ENCODE measurements at regions of chr1 and their contacts with region 1.

Region 1: GRCh38 chr1:205523891-205524793 is 19.7 kb downstream of the CDK18 start:
- DNase-seq: peak; percentile 79
- ATAC-seq: no peak
- H3K4me3 Mint-ChIP-seq: no peak overlapping the region
- H3K27ac Mint-ChIP-seq: no peak overlapping the region
- H3K4me1 Mint-ChIP-seq: no peaks in the 10 kb centered on the region
- H3K27me3 Mint-ChIP-seq: no peaks in the 10 kb centered on the region

Region 2: DNA sequence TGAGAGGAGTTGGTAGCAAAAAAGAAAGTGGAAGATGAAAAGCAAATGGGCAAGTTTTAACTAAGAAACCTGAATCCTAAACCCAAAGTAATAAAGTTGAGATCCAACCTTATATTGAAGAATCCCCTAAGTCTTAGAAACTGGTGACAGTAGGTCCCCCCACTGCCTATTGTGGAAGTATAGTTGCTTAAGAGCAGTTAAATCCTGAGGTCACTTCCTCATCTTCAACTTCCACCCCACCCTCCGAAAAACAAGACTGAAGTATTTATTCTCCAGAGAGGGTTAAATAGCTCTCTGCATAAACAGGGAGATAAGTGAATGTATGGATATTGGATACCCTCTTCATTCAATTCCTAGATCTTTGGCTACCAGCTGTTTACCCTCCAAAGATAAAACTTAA is 309.4 kb before region 1 on chr1:
- CTCF ChIA-PET with region 1: no interaction called
- POLR2A ChIA-PET with region 1: no interaction called
- DNase-seq: no peak
- ATAC-seq: no peak
- H3K4me3 Mint-ChIP-seq: peak overlapping the region; percentile 9
- H3K27ac Mint-ChIP-seq: peak overlapping the region; percentile 60
- H3K4me1 Mint-ChIP-seq: peaks cover 37% of the 10 kb centered on the region
- H3K27me3 Mint-ChIP-seq: peaks cover 4% of the 10 kb centered on the region

Region 3: DNA sequence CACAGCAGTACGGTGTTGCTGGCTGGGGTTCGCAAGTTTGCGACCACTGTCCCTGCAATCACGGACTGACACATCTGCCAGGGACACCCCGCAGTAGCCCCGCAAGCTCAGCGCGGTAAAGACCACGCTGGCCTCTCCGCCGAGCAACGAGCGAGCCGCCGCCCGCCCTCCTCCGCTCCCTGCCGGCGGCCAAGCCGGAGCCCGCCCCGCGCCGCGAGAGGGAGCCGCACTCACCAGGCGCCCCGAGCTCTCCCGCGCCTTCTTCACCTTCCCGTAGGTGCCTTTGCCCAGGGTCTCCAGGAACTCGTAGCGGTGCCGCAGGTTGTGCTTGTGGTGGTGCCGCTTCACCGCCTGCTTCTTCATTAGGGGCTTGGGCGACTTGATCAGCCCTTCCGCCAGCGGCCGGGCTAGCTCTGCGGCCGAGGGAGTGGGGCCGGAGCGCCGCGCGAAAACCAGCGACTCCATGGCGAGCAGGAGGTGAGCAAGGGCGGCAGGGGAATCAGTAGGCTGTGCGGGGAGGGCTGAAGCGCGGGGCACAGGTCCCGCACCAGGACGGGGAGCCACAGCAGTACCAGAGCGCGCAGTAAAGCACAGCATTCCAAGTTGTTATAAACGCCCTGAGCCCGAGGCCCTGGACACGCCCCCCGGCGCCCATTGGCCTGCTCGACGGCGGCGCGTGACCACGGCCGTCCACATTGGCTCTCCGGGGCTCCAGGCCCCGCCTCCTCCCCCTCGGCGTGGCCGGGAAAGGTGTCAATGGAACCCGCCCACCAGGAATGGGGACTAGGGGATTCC is 202.8 kb before region 1 on chr1 and contains the start of gene NUAK2:
- CTCF ChIA-PET with region 1: interaction called, 15 read pairs
- POLR2A ChIA-PET with region 1: no interaction called
- DNase-seq: peak; percentile 69
- ATAC-seq: peak; percentile 79
- H3K4me3 Mint-ChIP-seq: peak within 1 kb of the TSS; percentile 87
- H3K27ac Mint-ChIP-seq: peak within 1 kb of the TSS; percentile 56
- H3K4me1 Mint-ChIP-seq: peaks cover 52% of the 10 kb centered on the region
- H3K27me3 Mint-ChIP-seq: peaks cover 36% of the 10 kb centered on the region
- total RNA-seq, gene NUAK2: 1.6 TPM

Region 4: DNA sequence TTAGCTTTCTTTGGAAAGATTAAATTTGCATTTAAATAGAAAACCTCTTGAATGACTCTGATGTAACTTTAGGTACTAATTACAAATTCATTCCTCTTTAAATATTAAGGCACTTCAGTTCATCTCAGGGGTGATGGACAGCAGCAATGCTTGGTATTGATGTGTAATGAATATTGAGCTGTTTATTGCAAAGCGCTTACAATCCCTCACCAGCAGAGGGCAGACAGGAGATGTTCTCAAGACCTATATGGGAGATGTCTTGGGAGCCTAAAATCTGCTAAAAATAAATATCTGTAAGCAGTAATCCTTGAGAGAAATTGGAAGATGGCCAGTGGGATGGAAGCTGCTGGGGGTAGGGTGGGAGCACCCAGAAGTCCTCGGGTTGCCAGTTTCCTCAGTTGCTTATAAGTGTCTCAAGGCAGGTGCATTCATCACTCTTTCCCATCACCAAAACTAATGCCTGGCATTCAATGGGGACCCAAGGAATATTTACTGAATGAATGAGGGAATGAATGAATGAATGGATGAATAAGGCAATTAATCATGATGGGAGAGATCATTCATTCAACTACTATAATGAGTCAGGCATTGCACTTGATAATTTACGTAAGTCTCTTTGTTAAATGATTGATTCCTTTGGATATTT is 169.8 kb before region 1 on chr1:
- CTCF ChIA-PET with region 1: interaction called, 54 read pairs
- POLR2A ChIA-PET with region 1: interaction called, 6 read pairs
- DNase-seq: peak; percentile 79
- ATAC-seq: peak; percentile 51
- H3K4me3 Mint-ChIP-seq: no peak overlapping the region
- H3K27ac Mint-ChIP-seq: no peak overlapping the region
- H3K4me1 Mint-ChIP-seq: no peaks in the 10 kb centered on the region
- H3K27me3 Mint-ChIP-seq: peaks cover 21% of the 10 kb centered on the region

Region 5: GRCh38 chr1:205493241-205494085 is 30.7 kb before region 1 on chr1:
- CTCF ChIA-PET with region 1: interaction called, 274 read pairs
- POLR2A ChIA-PET with region 1: no interaction called
- DNase-seq: no peak
- ATAC-seq: peak; percentile 37
- H3K4me3 Mint-ChIP-seq: no peak overlapping the region
- H3K27ac Mint-ChIP-seq: no peak overlapping the region
- H3K4me1 Mint-ChIP-seq: peaks cover 13% of the 10 kb centered on the region
- H3K27me3 Mint-ChIP-seq: peaks cover 27% of the 10 kb centered on the region

Region 6: DNA sequence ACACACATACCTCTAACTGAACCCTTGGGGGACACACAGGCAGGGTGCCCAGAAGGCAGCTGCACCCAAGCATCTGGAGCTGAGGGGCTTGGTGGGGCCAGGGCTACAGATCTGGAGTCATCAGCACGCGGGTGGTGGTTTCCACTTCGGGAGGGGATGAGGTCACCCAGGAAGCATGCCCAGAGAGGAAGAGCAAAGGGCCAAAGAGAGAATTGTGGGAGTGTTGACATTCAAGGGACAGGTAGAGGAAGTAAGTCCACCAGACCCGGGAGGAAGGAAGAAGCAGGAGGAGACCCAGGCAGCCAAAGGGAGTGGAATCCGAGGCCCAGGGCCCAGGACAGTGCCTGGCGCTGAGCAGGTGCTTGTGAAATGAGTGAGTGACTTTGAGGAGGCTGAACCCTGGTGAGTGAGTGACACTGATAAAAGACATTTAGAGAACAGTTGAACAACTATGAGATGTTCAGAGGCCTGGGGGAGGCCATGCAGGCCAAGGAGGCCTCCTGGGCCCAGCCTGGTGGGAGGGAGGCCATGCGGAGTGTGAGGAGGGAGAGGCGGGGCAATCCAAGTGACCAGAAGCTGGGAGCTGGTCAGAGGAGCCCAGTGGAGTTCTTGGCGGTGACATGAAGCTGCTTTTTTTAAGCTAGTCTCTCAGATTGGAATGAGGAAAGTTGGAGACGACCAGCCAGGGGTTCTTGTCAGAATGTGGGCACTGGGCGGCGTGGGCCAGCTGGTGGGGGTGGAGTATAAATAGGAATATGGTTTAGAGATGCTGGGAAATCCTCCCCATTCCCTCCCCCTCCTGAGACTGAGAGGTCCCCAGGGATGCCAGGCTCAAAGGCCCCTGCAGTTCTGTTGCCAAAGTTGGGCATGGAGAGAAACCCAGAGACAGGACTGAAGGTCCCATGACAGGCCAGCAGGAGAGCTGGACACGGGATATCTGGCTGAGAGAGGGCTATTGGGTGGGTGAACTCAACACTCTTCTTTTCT is 11.8 kb before region 1 on chr1:
- CTCF ChIA-PET with region 1: interaction called, 14 read pairs
- POLR2A ChIA-PET with region 1: no interaction called
- DNase-seq: no peak
- ATAC-seq: no peak
- H3K4me3 Mint-ChIP-seq: no peak overlapping the region
- H3K27ac Mint-ChIP-seq: no peak overlapping the region
- H3K4me1 Mint-ChIP-seq: peaks cover 5% of the 10 kb centered on the region
- H3K27me3 Mint-ChIP-seq: no peaks in the 10 kb centered on the region

Region 7: GRCh38 chr1:205631727-205632373 is 107.7 kb after region 1 on chr1 and contains the start of gene ELK4:
- CTCF ChIA-PET with region 1: interaction called, 23 read pairs
- POLR2A ChIA-PET with region 1: interaction called, 6 read pairs
- DNase-seq: peak; percentile 99
- ATAC-seq: peak; percentile 83
- H3K4me3 Mint-ChIP-seq: peak within 1 kb of the TSS; percentile 90
- H3K27ac Mint-ChIP-seq: peak within 1 kb of the TSS; percentile 98
- H3K4me1 Mint-ChIP-seq: peaks cover 42% of the 10 kb centered on the region
- H3K27me3 Mint-ChIP-seq: peaks cover 4% of the 10 kb centered on the region
- total RNA-seq, gene ELK4: 95.2 to 97.5 TPM

Region 8: DNA sequence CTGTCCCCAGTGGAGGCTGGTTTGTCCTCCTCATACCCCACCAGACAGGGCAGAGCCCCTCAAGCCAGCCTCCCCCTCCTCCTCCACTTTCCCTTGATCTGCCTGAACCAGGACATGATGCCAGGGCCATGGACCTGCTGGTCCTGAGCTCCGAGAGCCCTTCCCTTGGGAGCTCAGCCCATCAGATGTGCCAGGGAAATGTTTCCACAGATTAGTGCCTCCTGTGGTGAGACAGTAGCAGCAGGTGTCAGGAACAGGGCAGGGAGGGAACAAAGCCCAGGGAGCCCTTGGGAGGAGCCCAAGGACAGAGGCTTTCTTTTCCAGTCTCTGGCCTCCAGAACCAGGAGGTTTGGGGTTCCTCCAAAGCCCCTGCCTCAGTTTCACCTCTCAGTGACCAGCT is 303.5 kb after region 1 on chr1:
- CTCF ChIA-PET with region 1: no interaction called
- POLR2A ChIA-PET with region 1: no interaction called
- DNase-seq: no peak
- ATAC-seq: no peak
- H3K4me3 Mint-ChIP-seq: no peak overlapping the region
- H3K27ac Mint-ChIP-seq: no peak overlapping the region
- H3K4me1 Mint-ChIP-seq: peaks cover 9% of the 10 kb centered on the region
- H3K27me3 Mint-ChIP-seq: peaks cover 4% of the 10 kb centered on the region